ENCODE measurements at regions of chr6 and their contacts with region 1.

Region 1: GRCh38 chr6:41553405-41553999 is 7.3 kb downstream of the FOXP4 start:
- DNase-seq: no peak
- H3K4me3 ChIP-seq: no peak overlapping the region
- H3K27ac ChIP-seq: no peak overlapping the region
- H3K4me1 ChIP-seq: no peaks in the 10 kb centered on the region
- H3K27me3 ChIP-seq: no peaks in the 10 kb centered on the region
- CTCF ChIP-seq: no peak

Region 2: DNA sequence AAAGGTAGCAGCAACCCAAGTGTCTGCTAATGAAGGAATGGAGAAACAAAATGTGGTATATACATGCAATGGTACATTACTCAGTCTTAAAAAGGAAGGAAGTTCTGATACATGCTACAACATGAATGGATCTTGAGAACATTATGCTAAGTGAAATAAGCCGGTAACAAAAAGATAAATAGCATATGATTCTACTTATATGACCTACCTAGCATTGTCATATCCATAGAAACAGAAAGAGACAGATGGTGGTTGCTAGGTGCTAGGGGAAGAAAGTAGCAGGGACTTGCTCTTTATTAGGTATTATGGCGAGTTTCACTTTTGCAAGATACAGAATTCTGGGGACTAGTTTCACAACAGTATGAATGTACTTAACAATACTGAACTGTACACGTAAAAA is 1056.9 kb after region 1 on chr6:
- CTCF ChIA-PET with region 1: no interaction called
- POLR2A ChIA-PET with region 1: interaction called, 10 read pairs
- intact Hi-C with region 1: no loop called
- DNase-seq: no peak
- H3K4me3 ChIP-seq: no peak overlapping the region
- H3K27ac ChIP-seq: no peak overlapping the region
- H3K4me1 ChIP-seq: no peaks in the 10 kb centered on the region
- H3K27me3 ChIP-seq: no peaks in the 10 kb centered on the region
- CTCF ChIP-seq: no peak

Region 3: GRCh38 chr6:42790549-42791181 is 1237.2 kb after region 1 on chr6:
- CTCF ChIA-PET with region 1: no interaction called
- POLR2A ChIA-PET with region 1: no interaction called
- intact Hi-C with region 1: no loop called
- DNase-seq: no peak
- H3K4me3 ChIP-seq: no peak overlapping the region
- H3K27ac ChIP-seq: no peak overlapping the region
- H3K4me1 ChIP-seq: no peaks in the 10 kb centered on the region
- H3K27me3 ChIP-seq: no peaks in the 10 kb centered on the region
- CTCF ChIP-seq: no peak